Aorta (tissue), 5 donors: ENCODE measurements at regions of chr4 and their contacts with region 1.

Region 1: DNA sequence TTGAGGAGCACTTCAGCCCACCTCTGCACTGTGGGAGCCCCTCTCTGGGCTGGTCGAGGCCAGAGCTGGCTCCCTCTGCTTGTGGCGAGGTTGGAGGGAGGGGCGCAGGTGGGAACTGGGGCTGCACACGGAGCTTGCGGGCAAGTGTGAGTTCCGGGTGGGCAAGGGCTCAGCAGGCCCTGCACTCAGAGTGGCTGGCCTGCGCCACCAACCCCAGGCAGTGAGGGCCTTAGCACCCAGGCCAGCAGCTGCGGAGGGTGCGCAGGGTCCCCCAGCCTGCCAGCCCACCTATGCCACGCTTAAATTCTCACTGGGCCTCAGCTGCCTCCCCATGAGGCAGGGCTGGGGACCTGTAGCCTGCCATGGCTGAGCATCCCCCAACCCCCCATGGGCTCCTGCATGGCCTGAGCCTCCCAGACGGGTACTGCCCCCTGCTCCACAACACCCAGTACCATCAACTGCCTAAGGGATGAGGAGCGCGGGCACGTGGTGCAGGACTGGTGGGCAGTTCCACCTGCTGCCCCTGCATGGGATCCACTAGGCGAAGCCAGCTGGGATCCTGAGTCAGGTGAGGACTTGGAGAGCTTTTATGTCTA is 110.9 kb downstream of the SLC39A8 start:
- DNase-seq: no peak
- ATAC-seq: peak; percentile 50
- H3K4me3 ChIP-seq: no peak overlapping the region
- H3K27ac ChIP-seq: no peak overlapping the region
- H3K4me1 ChIP-seq: no peaks in the 10 kb centered on the region
- H3K27me3 ChIP-seq: no peaks in the 10 kb centered on the region

Region 2: DNA sequence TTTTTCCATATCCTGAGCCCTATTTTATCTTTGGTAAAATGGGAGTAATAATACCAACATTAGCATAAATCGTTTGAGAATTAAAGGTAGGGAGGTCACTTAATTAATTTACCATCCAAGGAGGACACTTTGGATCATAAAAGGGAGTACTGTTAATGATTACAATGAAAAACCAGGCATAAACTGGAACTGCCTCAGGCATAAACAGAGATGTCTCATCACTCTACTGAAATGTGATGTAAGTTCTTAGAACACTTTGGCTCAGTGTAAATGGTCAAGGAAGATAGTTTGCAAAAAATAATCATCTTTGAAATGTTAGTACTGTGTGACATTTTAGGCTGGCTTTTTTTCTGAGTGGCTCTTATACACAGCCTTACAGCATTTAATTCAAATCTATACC is 157.7 kb before region 1 on chr4:
- intact Hi-C with region 1: loop called in 1 of 2 experiments (anchors 10 kb)
- DNase-seq: no peak
- ATAC-seq: no peak
- H3K4me3 ChIP-seq: no peak overlapping the region
- H3K27ac ChIP-seq: no peak overlapping the region
- H3K4me1 ChIP-seq: no peaks in the 10 kb centered on the region
- H3K27me3 ChIP-seq: no peaks in the 10 kb centered on the region

Region 3: DNA sequence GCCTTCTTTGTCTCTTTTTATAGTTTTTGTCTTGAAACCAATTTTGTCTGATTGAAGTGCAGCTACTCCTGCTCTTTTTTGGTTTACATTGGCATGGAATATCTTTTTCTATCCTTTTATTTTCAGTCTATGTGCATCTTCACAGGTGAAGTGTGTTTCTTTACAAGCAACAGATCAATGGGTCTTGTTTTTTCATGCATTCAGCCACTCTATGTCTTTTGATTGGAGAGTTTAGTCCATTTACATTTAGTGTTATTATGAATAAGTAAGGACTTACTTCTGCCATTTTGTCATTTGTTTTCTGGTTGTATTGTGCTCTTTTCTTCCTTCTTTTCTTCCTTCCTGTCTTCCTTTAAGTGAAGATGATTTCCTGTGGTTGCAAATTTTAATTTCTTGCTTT is 113.5 kb before region 1 on chr4:
- intact Hi-C with region 1: no loop called
- DNase-seq: no peak
- ATAC-seq: no peak
- H3K4me3 ChIP-seq: no peak overlapping the region
- H3K27ac ChIP-seq: no peak overlapping the region
- H3K4me1 ChIP-seq: no peaks in the 10 kb centered on the region
- H3K27me3 ChIP-seq: no peaks in the 10 kb centered on the region